ENCODE measurements at regions of chr11 and their contacts with region 1.

Region 1: DNA sequence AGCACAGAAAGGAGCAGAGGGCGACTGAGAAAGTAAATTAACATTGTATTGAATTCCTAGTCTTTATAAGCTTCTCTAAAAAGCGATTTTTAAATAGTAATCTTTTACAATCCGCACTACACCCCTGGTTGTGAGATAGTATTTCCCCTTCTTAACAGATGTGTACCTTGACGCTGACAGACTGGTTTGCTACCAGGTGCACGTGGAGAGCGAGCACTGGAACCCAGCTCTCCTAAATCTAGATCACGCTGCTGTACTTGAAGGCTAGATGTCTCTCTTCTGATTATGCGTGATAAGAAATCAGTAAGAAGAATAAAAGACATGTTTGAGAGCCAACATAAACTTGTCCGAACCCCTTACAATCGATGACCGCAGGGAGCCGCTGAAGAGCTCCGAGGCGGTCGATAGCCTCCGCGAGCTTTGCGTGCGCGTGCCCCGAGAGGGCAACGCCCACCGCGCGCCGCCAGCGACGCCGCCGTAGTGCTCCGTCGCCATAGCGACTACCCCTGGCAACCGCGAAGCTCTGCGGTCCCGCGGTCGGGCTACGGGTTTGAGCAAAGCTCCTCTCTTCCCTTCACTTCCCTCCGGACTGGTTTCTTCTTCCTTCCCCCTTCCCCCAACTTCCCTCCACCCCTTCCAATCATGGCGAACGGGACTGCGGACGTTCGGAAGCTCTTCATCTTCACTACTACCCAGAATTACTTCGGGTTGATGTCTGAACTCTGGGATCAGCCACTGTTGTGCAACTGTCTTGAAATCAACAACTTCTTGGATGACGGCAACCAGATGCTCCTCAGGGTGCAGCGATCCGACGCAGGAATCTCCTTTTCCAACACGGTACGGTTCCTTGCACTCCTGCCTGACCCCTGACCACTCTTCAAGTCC is at the start of gene DYNC2H1:
- DNase-seq: peak; percentile 82
- H3K4me3 ChIP-seq: peak within 1 kb of the TSS; percentile 50 to 68
- H3K27ac ChIP-seq: peak within 1 kb of the TSS; percentile 64 to 67
- H3K4me1 ChIP-seq: no peaks in the 10 kb centered on the region
- H3K27me3 ChIP-seq: no peaks in the 10 kb centered on the region
- CTCF ChIP-seq: peak in 3 of 4 experiments; percentile 18 to 53 (median 51)
- POLR2A ChIP-seq: no peak
- total RNA-seq, gene DYNC2H1: 18.1 to 18.2 TPM

Region 2: DNA sequence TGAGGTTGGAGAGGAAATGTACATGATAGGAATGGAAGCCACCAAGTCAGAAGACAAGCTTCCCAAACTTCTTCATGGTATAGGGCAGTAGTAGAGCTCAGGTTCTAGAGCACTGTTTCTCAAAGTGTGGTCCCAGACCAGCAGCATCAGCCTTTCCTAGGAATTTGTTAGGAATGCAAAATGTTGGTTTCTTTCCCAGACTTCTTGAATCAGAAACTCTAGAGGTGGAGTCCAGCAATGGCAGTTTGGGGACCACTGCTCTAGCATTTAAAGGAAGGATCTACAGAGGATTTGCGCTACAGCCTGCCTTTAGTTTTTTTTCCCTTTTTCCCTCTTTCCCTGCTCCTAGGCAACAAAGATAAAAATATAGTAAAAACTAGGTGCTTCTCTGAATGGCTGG is 217.4 kb before region 1 on chr11:
- intact Hi-C with region 1: no loop called
- DNase-seq: no peak
- H3K4me3 ChIP-seq: no peak overlapping the region
- H3K27ac ChIP-seq: no peak overlapping the region
- H3K4me1 ChIP-seq: no peaks in the 10 kb centered on the region
- H3K27me3 ChIP-seq: no peaks in the 10 kb centered on the region
- CTCF ChIP-seq: no peak
- POLR2A ChIP-seq: no peak

Region 3: DNA sequence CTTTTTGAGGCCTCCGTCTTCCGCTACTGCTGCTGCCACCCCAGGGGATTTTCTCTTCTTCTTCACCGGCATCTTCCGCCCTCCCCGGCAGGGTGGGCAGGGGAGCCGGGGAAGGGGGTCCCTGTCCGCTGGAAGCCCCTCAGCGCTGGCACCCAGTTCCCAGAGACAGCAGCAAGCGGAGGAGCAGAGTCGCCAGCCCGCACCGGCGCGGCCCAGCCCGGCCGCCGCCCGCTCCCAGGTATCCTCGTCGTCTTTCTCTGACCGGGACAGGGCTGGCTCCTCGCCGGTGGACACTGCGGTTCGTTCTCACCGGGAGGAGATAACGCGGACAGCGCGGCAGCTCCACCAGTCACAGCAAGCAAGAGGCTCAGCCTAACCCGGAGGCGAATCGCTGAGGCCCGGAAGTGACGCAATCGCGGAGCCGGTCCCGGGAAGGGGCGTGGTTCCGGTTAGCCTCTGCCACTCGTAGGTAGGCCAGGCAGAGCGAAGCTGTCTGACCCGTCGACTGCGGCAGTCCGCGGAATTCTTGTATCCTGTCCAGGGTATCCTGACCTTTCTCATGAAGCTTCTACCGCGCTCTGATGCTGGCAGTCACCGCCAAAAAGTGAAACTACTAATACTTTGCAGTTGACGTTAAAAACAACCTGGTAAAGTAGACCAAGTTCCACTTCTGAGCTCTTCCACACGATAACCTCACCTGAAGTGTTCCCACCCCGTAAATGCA is 17.2 kb before region 1 on chr11 and contains the start of gene DCUN1D5:
- intact Hi-C with region 1: loop called (anchors 2 kb)
- DNase-seq: peak; percentile 96
- H3K4me3 ChIP-seq: peak within 1 kb of the TSS; percentile 85 to 95
- H3K27ac ChIP-seq: peak within 1 kb of the TSS; percentile 84 to 85
- H3K4me1 ChIP-seq: no peaks in the 10 kb centered on the region
- H3K27me3 ChIP-seq: no peaks in the 10 kb centered on the region
- CTCF ChIP-seq: no peak
- POLR2A ChIP-seq: peak; percentile 65
- total RNA-seq, gene DCUN1D5: 38.9 to 74.8 TPM